ENCODE measurements at regions of chr5 and their contacts with region 1.

Region 1: GRCh38 chr5:148457183-148457620 is 73.4 kb downstream of the FBXO38 start:
- DNase-seq: no peak
- ATAC-seq: no peak

Region 2: DNA sequence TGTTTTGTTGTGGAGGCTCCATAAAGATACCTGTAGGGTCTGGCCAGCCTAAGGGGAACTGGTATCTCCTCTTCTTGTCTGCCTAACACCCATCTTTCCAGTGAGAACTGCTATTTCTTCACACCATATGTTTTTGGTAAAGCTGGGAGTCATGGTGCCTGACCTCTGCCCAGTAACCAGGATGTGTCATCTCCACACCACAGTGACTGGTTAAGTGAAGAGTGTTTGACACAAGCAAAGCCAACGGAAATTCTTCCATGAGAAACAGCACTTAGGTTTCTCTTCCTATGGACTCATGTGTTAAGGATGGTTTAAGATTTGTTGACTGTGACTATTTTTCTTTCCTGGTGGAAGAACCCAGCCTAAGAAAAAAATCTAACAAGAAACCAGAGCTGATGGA is 85.6 kb after region 1 on chr5:
- intact Hi-C with region 1: loop called in 1 of 2 experiments (anchors 5 kb)
- DNase-seq: no peak
- ATAC-seq: no peak

Region 3: GRCh38 chr5:148653836-148654781 is 196.9 kb after region 1 on chr5 and contains the start of gene HTR4:
- intact Hi-C with region 1: loop called in 1 of 2 experiments (anchors 5 kb)
- DNase-seq: peak; percentile 36
- ATAC-seq: peak; percentile 71 to 81
- total RNA-seq, gene HTR4: 4.7 to 8.8 TPM

Measured in left cardiac atrium (tissue), 4 donors.